HEK293 (cell line): ENCODE measurements at regions of chr9 and their contacts with region 1.

Region 1: GRCh38 chr9:37079370-37080164 is 40.8 kb upstream of the ZCCHC7 start:
- H3K4me3 ChIP-seq: peak overlapping the region; percentile 80
- H3K27ac ChIP-seq: peak overlapping the region; percentile 91
- H3K4me1 ChIP-seq: peaks cover 12% of the 10 kb centered on the region
- CTCF ChIP-seq: 0 out of 2 replicates have a peak, but pooled peaks have one; percentile 12

Region 2: GRCh38 chr9:37027582-37028419 is 51.8 kb before region 1 on chr9:
- CTCF ChIA-PET with region 1: no interaction called
- POLR2A ChIA-PET with region 1: interaction called, 11 read pairs
- H3K4me3 ChIP-seq: peak overlapping the region; percentile 39
- H3K27ac ChIP-seq: no peak overlapping the region
- H3K4me1 ChIP-seq: no peaks in the 10 kb centered on the region; the same call in 1 of the 2 replicates
- CTCF ChIP-seq: no peak

Region 3: DNA sequence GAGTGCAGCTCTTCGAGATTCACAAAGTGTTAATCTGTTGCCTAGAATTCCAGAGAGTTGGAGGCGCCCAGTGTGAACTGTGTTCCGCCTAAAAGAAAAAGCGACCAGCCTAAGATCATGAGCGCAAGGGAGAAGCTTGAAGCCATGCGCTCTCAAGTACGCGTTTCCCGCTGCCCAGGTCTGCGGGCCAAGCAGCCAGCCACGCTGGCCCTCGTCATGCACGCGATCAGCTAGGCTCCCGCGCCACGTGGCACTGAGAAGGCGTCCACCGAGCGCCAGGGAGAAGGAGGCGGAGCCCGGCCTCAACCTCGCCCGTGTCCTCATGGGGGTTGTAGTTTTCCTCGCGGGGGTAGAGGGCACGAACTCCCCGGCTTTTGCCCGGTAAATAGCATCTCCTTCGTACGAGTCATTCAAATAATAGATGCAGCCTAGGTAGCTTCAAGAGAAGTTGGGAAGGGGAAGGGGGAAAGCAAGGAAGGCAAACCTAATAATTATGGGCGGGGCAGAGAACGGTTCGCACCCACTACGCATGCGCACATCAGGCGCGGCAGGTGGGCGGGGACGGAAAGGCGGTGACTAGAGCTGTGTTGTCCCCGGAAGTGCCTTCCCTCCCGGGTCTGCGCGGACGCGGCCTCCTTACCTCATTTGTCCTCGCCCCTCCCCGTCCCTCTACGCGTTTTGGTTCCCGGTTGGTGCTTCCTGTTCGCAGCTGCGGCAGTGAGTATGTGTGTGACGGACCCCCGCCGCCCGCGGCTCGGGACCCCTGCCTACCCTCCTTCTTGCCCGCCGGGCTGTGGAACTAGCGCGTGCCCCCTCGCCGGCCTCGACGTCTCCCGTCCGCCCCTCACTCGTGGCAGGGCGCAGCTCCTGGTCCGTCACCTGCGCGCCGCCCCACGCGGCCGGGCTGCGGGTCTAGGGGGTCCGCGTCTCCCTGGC is 40.6 kb after region 1 on chr9 and contains the start of gene ZCCHC7:
- CTCF ChIA-PET with region 1: interaction called, 3 read pairs
- POLR2A ChIA-PET with region 1: interaction called, 28 read pairs
- H3K4me3 ChIP-seq: peak within 1 kb of the TSS; percentile 88
- H3K27ac ChIP-seq: peak within 1 kb of the TSS; percentile 57
- H3K4me1 ChIP-seq: no peaks in the 10 kb centered on the region
- CTCF ChIP-seq: no peak